Calu3 (cell line): ENCODE measurements at regions of chr3 and their contacts with region 1.

Region 1: DNA sequence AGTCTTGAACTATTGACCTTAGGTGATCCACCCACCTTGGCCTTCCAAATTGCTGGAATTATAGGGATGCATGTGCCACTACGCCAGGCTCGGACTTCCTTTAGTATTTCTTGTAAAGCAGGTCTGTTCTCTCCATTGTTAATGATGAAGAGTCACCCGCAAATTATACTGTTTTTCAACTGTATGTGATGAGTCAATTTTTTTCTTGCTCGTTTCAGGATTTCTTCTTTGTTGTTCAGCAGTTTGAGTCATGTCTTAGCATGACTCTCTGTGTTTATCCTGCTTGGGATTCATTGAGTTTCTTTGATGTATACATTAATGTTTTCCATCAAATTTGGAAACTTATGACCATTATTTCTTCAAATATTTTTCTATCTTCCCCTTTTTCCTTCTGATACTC is 28.9 kb downstream of the GRAMD1C start:
- DNase-seq: no peak
- H3K4me3 Mint-ChIP-seq: no peak overlapping the region
- H3K27ac Mint-ChIP-seq: no peak overlapping the region
- H3K4me1 Mint-ChIP-seq: no peaks in the 10 kb centered on the region
- H3K27me3 Mint-ChIP-seq: no peaks in the 10 kb centered on the region
- CTCF ChIP-seq: no peak

Region 2: DNA sequence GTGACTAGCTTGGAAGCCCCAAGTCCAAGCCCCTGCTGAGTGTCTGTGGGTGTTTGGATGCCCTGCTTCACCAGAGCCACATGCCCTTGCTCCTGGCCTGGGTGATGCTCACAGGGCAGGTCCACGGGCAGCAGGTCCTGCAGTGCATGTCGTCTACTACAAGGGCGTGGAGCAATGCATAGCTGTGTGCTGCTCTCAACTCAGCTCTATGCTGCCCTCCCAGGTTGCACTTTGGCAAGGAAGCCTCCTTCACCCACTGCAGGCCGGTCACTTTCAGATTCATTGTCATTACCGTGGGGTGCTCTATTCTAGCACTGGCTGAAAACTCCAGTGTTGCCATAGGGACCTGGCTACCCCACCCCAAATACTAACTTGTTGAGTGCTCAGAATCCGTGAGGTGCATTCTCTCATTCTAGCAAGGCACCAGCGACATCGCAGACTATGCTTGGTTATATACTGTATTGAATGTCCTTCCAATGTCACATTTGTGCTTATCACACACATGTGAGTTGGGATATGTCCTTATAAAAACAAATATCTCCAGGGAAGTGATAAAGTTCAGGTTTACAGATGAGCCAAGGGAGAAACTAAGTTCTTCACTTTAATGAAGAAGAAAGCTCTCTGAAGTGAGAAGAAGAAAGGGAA is 22.9 kb after region 1 on chr3:
- CTCF ChIA-PET with region 1: interaction called, 22 read pairs
- intact Hi-C with region 1: no loop called
- DNase-seq: peak; percentile 27
- H3K4me3 Mint-ChIP-seq: no peak overlapping the region
- H3K27ac Mint-ChIP-seq: no peak overlapping the region
- H3K4me1 Mint-ChIP-seq: no peaks in the 10 kb centered on the region
- H3K27me3 Mint-ChIP-seq: no peaks in the 10 kb centered on the region
- CTCF ChIP-seq: no peak